Heart right ventricle (tissue), 16 donors: ENCODE measurements at regions of chr1 and their contacts with region 1.

Region 1: GRCh38 chr1:91234181-91234580 is 170.5 kb downstream of the HFM1 start:
- DNase-seq: no peak
- ATAC-seq: no peak
- H3K4me3 ChIP-seq: no peak overlapping the region
- H3K27ac ChIP-seq: no peak overlapping the region
- H3K4me1 ChIP-seq: no peaks in the 10 kb centered on the region
- H3K27me3 ChIP-seq: no peaks in the 10 kb centered on the region
- CTCF ChIP-seq: no peak

Region 2: DNA sequence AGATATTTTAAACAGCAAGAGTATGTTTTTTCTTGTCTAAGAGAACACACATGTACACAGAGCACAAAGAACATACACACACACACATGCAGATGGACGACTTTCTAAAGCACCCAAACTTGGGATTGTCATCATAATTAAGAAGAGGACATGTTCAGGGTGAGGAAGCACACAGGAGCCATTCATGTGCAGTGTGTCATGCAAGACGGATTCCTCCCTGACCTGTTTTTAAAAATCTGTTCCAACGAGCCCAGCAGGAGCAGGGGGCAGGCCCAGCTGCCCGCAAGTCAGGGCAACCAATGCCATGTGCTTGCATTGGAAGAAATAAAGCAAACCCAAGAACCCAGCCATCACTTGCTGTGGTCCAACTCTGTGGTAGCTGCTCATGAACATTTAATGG is 45.1 kb before region 1 on chr1:
- intact Hi-C with region 1: loop called in 1 of 10 experiments (anchors 1 kb)
- DNase-seq: no peak
- ATAC-seq: no peak
- H3K4me3 ChIP-seq: no peak overlapping the region
- H3K27ac ChIP-seq: no peak overlapping the region
- H3K4me1 ChIP-seq: no peaks in the 10 kb centered on the region
- H3K27me3 ChIP-seq: peaks cover 0 to 10% (median 0%) of the 10 kb centered on the region in 7 donors
- CTCF ChIP-seq: no peak

Region 3: DNA sequence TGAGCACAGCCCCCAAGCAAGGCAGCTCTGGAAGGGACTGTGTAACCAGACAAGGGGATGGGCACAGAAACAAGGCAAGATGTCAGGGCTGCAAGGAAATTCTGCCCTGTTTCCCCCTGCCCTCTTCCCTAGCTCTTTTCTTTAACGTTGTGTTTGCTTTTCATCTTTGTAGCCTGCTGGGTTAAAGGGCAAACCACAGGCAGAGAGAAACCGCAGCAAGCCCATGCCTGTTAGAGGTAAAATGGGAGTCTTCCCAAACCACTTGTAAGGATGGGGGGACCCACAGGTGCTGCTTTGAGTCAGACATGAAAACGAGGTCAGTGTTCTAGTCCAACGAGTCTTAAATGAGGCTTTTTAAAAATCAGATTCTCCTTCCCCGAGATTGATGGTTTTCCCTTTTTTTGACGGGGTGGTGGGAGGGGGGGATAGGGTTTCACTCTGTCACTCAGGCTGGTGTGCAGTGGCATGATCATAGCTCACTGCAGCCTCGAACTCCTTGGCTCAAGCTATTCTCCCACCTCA is 638.4 kb after region 1 on chr1:
- intact Hi-C with region 1: no loop called
- DNase-seq: no peak
- ATAC-seq: no peak
- H3K4me3 ChIP-seq: no peak overlapping the region
- H3K27ac ChIP-seq: no peak overlapping the region
- H3K4me1 ChIP-seq: peaks cover 3 to 57% (median 42%) of the 10 kb centered on the region in 9 donors
- H3K27me3 ChIP-seq: no peaks in the 10 kb centered on the region
- CTCF ChIP-seq: no peak